ENCODE measurements at regions of chr12 and their contacts with region 1.

Region 1: GRCh38 chr12:15856097-15856982 is 25.8 kb upstream of the STRAP start:
- DNase-seq: peak; percentile 82
- H3K4me3 ChIP-seq: no peak overlapping the region
- H3K27ac ChIP-seq: no peak overlapping the region
- H3K4me1 ChIP-seq: no peaks in the 10 kb centered on the region
- H3K27me3 ChIP-seq: no peaks in the 10 kb centered on the region
- CTCF ChIP-seq: peak; percentile 37 to 42
- POLR2A ChIP-seq: no peak

Region 2: DNA sequence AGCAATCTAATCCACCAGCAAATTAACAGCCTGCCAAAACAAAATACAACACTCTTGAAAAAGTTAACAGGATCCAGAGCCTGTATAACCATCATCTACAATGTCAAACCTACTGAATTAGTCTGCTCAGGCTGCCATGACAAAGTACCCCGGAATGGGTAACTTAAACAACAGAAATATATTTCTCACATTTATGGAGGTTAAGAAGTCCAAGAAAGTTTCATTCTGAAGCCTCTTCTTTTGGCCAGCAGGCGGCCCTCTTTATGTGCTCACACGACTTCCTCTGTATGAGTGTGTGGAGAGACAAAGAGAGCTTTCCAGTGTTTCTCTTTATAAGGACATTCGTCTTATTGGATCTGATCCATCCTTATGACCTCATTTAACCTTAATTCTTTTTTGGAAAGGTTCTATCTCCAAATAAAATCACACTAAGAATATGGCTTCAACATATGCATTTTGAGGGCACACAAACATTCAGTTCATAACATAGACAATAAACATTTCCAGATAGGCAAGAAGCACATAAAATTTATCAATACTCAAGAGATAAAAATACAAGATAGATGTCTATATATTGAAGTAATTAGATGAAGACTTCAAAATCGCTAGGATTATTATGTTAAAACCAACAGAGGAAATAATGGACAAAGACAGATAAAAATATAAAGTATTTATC is 629.2 kb before region 1 on chr12:
- CTCF ChIA-PET with region 1: interaction called, 3 read pairs
- POLR2A ChIA-PET with region 1: no interaction called
- dilution Hi-C with region 1: no loop called
- intact Hi-C with region 1: loop called (anchors 1 kb)
- DNase-seq: peak; percentile 55
- H3K4me3 ChIP-seq: no peak overlapping the region
- H3K27ac ChIP-seq: no peak overlapping the region
- H3K4me1 ChIP-seq: no peaks in the 10 kb centered on the region
- H3K27me3 ChIP-seq: peaks cover 7 to 23% of the 10 kb centered on the region in 2 experiments
- CTCF ChIP-seq: peak; percentile 56 to 67
- POLR2A ChIP-seq: no peak

Region 3: GRCh38 chr12:15532364-15532977 is 323.9 kb before region 1 on chr12:
- CTCF ChIA-PET with region 1: interaction called, 46 read pairs
- POLR2A ChIA-PET with region 1: no interaction called
- dilution Hi-C with region 1: no loop called
- intact Hi-C with region 1: loop called (anchors 1 kb)
- DNase-seq: peak; percentile 41
- H3K4me3 ChIP-seq: no peak overlapping the region
- H3K27ac ChIP-seq: no peak overlapping the region
- H3K4me1 ChIP-seq: no peaks in the 10 kb centered on the region
- H3K27me3 ChIP-seq: peaks cover 0 to 3% of the 10 kb centered on the region in 2 experiments
- CTCF ChIP-seq: peak; percentile 25 to 45
- POLR2A ChIP-seq: no peak

Region 4: DNA sequence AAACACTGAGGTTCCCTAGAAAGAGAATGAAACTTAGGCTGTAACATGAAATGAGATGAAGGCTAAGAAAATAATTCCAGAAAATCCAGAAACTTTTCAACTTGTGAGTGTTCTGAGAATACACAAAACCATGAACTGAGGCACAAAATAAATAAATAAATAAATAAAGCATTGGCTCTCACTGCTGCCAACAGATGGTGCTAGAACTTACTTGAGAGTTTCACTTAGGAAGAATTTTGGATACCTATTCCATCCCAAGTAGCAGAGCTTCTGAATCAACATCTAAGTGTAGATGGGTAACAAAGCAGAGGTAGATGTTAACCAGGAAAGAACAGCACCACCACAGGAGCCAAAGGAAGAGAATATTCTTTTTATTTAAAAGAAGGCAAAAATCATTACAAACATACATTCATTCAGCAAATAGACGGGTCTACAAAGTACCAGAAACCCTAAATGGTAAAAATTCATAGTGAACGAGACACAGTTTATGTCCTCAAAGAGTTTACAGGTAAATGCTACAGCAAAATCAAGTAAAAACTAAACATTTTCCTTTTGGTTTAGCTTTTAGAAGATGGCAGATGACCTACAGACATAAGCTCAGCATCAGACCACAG is 83.8 kb before region 1 on chr12:
- CTCF ChIA-PET with region 1: interaction called, 5 read pairs
- POLR2A ChIA-PET with region 1: no interaction called
- dilution Hi-C with region 1: no loop called
- intact Hi-C with region 1: loop called (anchors 2 kb)
- DNase-seq: peak; percentile 29
- H3K4me3 ChIP-seq: no peak overlapping the region
- H3K27ac ChIP-seq: no peak overlapping the region
- H3K4me1 ChIP-seq: no peaks in the 10 kb centered on the region
- H3K27me3 ChIP-seq: no peaks in the 10 kb centered on the region
- CTCF ChIP-seq: peak; percentile 22 to 44
- POLR2A ChIP-seq: no peak

Region 5: GRCh38 chr12:15899282-15899870 is 43.0 kb after region 1 on chr12:
- CTCF ChIA-PET with region 1: interaction called, 15 read pairs
- POLR2A ChIA-PET with region 1: no interaction called
- dilution Hi-C with region 1: no loop called
- intact Hi-C with region 1: loop called (anchors 1 kb)
- DNase-seq: peak; percentile 54
- H3K4me3 ChIP-seq: no peak overlapping the region
- H3K27ac ChIP-seq: no peak overlapping the region
- H3K4me1 ChIP-seq: peaks cover 3% of the 10 kb centered on the region
- H3K27me3 ChIP-seq: no peaks in the 10 kb centered on the region
- CTCF ChIP-seq: peak; percentile 44 to 45
- POLR2A ChIP-seq: no peak

Measured in endothelial cell of umbilical vein (primary cell).